HEK293 (cell line): ENCODE measurements at regions of chr3 and their contacts with region 1.

Region 1: DNA sequence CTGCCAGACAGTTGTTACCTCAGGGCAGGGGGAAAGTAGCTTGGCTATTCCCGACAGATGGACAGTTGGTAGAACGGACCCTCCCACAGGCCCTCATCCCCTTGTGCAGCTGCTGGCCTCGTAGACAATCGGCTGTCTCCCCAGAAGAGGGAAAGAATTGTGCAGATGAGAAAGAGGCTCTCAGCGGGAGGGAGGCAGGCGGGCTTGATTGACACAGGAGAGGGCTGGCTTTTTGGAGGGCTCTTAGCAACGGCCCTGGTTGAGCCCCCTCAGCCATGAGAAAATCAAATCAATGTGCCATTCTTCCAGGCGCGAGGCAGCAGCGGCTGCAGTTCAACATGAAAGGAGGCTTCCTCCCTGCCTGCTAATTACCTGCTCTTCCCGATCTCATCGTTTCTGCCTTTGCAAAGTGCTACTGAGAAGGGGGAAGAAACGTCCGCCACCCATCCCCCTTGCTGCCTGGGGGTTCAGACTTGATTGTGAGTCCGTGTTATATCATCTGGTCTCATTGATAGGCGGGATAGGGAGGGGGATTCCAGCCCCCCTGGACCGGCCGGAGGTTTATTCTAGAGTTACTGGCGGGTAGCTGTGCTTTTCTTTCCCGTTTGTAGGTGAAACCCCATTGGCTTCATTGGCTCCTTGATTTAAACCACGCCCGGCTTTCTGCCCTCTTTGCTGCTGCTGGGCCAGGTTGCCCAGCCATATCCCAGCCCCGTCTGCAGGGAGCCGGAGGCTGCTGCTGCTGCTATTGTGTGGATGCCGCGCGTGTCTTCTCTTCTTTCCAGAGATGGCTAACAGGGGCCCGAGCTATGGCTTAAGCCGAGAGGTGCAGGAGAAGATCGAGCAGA is at the start of gene TAGLN3:
- H3K4me3 ChIP-seq: 0 out of 2 replicates have a peak within 1 kb of the TSS, but pooled peaks have one; percentile 3
- H3K27ac ChIP-seq: no peak within 1 kb of the TSS
- H3K4me1 ChIP-seq: no peaks in the 10 kb centered on the region
- CTCF ChIP-seq: no peak

Region 2: GRCh38 chr3:111582108-111582449 is 416.8 kb before region 1 on chr3:
- CTCF ChIA-PET with region 1: no interaction called
- POLR2A ChIA-PET with region 1: no interaction called
- H3K4me3 ChIP-seq: no peak overlapping the region
- H3K27ac ChIP-seq: no peak overlapping the region
- H3K4me1 ChIP-seq: no peaks in the 10 kb centered on the region
- CTCF ChIP-seq: no peak

Region 3: GRCh38 chr3:111851511-111851954 is 147.3 kb before region 1 on chr3:
- CTCF ChIA-PET with region 1: no interaction called
- POLR2A ChIA-PET with region 1: no interaction called
- H3K4me3 ChIP-seq: no peak overlapping the region
- H3K27ac ChIP-seq: no peak overlapping the region
- H3K4me1 ChIP-seq: no peaks in the 10 kb centered on the region
- CTCF ChIP-seq: no peak

Region 4: GRCh38 chr3:111967651-111968274 is 31.1 kb before region 1 on chr3:
- CTCF ChIA-PET with region 1: no interaction called
- POLR2A ChIA-PET with region 1: no interaction called
- H3K4me3 ChIP-seq: no peak overlapping the region
- H3K27ac ChIP-seq: no peak overlapping the region
- H3K4me1 ChIP-seq: no peaks in the 10 kb centered on the region
- CTCF ChIP-seq: peak; percentile 55; the same call in 1 of the 2 replicates

Region 5: DNA sequence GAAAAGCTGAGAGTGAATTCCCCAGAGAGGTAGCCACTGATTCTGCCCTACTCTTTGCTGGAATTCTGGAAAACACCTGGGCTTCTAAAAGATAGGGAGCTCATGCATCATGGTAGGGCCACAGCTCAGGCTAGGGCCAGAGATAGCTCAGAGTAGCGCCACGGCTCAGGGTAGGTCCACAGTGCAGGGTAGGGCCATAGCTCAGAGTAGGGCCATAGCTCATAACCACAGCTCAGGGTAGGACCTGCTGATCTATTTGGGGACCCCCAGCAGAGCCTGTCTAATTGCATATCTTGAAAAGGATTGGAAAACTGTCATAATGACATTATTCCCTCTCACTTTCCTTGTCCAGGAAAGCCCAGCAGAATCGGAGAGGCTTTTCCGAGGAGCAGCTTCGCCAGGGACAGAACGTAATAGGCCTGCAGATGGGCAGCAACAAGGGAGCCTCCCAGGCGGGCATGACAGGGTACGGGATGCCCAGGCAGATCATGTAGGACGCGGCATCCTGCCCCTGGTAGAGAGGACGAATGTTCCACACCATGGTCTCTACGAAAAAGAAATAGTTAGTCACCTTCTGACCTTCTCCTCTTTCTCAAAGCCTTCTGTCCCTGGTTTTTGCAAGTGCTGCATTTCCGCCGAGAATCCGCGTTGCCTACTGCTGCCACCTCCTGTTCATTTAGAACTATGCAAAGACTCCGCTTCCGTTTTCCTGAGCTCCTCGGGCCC is 14.4 kb after region 1 on chr3:
- CTCF ChIA-PET with region 1: interaction called, 28 read pairs
- POLR2A ChIA-PET with region 1: no interaction called
- H3K4me3 ChIP-seq: no peak overlapping the region
- H3K27ac ChIP-seq: no peak overlapping the region
- H3K4me1 ChIP-seq: no peaks in the 10 kb centered on the region
- CTCF ChIP-seq: no peak

Region 6: DNA sequence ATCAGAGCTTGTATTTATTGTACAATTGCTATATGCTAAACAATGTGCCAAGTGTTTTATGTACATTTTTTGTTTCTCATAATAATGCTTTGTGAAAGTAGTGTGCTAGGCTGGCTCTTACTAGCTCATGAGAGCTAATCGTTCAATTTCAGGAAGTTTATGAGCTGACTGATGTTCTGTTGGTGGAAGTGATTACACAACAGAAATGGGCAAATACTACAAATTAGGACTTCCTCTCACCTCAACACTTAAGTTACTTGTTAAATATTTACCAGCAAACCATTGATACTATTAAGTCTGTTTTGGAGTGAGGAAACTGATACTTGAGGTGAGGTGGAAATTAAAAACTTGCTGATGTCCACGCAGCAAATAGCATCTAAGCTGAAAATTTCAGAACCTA is 262.9 kb after region 1 on chr3:
- CTCF ChIA-PET with region 1: no interaction called
- POLR2A ChIA-PET with region 1: no interaction called
- H3K4me3 ChIP-seq: no peak overlapping the region
- H3K27ac ChIP-seq: no peak overlapping the region
- H3K4me1 ChIP-seq: no peaks in the 10 kb centered on the region
- CTCF ChIP-seq: no peak